PC-9 (cell line): ENCODE measurements at regions of chr19 and their contacts with region 1.

Region 1: GRCh38 chr19:19732579-19733501 is at the start of gene ZNF14:
- DNase-seq: peak; percentile 90 to 93
- H3K4me3 ChIP-seq: peak within 1 kb of the TSS; percentile 73
- H3K27ac ChIP-seq: no peak within 1 kb of the TSS
- H3K4me1 ChIP-seq: peaks cover 4% of the 10 kb centered on the region
- H3K27me3 ChIP-seq: no peaks in the 10 kb centered on the region
- CTCF ChIP-seq: no peak
- total RNA-seq, gene ZNF14: 2.8 and 3.0 TPM in 2 replicates

Region 2: DNA sequence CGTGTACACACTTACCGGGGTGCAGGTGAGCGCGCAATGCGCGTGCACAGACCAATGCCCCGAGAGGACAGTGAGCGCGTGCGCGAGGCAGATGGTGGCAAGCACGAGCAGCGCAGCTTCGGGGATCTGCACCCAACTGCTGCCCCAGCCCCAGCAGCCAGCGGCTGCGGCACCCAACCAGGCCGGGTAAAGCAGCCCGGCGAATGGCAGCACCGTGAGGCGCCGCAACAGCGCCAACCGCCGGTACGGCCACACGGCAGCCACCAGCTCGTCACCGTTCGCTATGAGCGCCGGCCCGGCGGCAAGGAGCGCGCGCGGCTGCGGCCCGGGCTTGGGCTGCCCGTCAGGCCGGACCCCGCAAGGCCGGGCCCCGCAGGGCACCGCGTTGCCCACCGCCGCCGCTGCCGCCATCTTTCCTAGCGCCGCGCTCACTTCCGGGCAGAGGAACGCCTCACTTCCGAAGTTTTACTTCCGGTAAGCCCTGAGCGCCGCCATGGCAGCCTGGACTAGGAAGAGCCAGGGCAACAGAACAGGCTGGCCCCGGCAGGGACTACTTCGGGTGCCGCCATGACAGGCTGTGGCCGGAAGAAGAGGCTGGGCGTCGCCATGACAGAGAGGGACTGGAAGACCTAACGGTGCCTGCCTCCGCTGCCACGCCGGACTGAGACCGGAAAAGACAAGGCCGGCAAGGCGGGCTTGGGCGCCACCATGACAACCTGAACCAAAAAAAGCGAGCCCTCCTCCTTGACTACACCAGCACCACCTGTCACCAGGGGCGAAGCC is 69.4 kb before region 1 on chr19 and contains the start of gene ATP13A1:
- CTCF ChIA-PET with region 1: no interaction called
- POLR2A ChIA-PET with region 1: no interaction called
- intact Hi-C with region 1: loop called (anchors 5 kb)
- DNase-seq: peak; percentile 92 to 96
- H3K4me3 ChIP-seq: peak within 1 kb of the TSS; percentile 95
- H3K27ac ChIP-seq: peak within 1 kb of the TSS; percentile 64
- H3K4me1 ChIP-seq: peaks cover 19% of the 10 kb centered on the region
- H3K27me3 ChIP-seq: no peaks in the 10 kb centered on the region
- CTCF ChIP-seq: no peak
- total RNA-seq, gene ATP13A1: 41.1 and 59.7 TPM in 2 replicates

Region 3: DNA sequence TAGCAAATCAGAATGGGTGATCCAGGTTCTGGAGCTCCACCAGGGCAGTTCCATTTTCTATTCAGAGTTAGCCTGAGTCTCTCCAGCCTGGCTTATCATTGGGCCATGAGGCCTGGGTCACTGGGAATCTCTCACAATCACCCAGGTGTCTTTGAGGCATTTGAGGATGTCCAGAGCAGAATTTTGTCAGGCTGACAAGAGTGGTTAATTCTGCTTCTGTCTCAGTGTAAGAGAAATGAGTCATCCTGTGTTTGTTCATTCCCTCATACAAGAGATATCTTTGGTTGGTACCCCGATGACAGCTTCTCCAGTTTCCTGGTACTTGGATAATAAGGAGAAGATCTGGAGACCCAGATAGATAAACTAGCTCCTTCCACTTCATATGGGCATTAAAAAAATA is 178.3 kb after region 1 on chr19:
- CTCF ChIA-PET with region 1: interaction called, 11 read pairs
- POLR2A ChIA-PET with region 1: no interaction called
- intact Hi-C with region 1: no loop called
- DNase-seq: no peak
- H3K4me3 ChIP-seq: no peak overlapping the region
- H3K27ac ChIP-seq: no peak overlapping the region
- H3K4me1 ChIP-seq: no peaks in the 10 kb centered on the region
- H3K27me3 ChIP-seq: no peaks in the 10 kb centered on the region
- CTCF ChIP-seq: no peak

Region 4: GRCh38 chr19:20067943-20068342 is 335.1 kb after region 1 on chr19:
- CTCF ChIA-PET with region 1: no interaction called
- POLR2A ChIA-PET with region 1: interaction called, 35 read pairs
- intact Hi-C with region 1: no loop called
- DNase-seq: no peak
- H3K4me3 ChIP-seq: no peak overlapping the region
- H3K27ac ChIP-seq: no peak overlapping the region
- H3K4me1 ChIP-seq: no peaks in the 10 kb centered on the region
- H3K27me3 ChIP-seq: peaks cover 6% of the 10 kb centered on the region; the same call in 1 of the 2 replicates
- CTCF ChIP-seq: no peak